Naive thymus-derived CD4-positive, alpha-beta T cell (primary cell): ENCODE measurements at regions of chr3 and their contacts with region 1.

Region 1: GRCh38 chr3:50611464-50612233 is at the start of gene CISH:
- DNase-seq: peak; percentile 86 to 98 (median 89)
- ATAC-seq: peak; percentile 77
- H3K4me3 ChIP-seq: peak within 1 kb of the TSS; percentile 93
- H3K4me3 Mint-ChIP-seq: peak within 1 kb of the TSS; percentile 83 to 98 (median 92)
- H3K27ac ChIP-seq: peak within 1 kb of the TSS; percentile 93
- H3K27ac Mint-ChIP-seq: peak within 1 kb of the TSS; percentile 89 to 96 (median 94)
- H3K4me1 ChIP-seq: peaks cover 55 to 56% of the 10 kb centered on the region in 2 donors
- H3K4me1 Mint-ChIP-seq: peaks cover 53 to 80% (median 64%) of the 10 kb centered on the region in 7 donors
- H3K27me3 ChIP-seq: no peaks in the 10 kb centered on the region
- H3K27me3 Mint-ChIP-seq: peaks cover 0 to 2% (median 0%) of the 10 kb centered on the region in 5 donors
- total RNA-seq, gene CISH: 10.9 to 486 (median 28.5) TPM

Region 2: GRCh38 chr3:50365080-50365841 is 246.4 kb before region 1 on chr3:
- CTCF ChIA-PET with region 1: no interaction called
- POLR2A ChIA-PET with region 1: no interaction called
- intact Hi-C with region 1: loop called in 1 of 2 experiments (anchors 2 kb)
- DNase-seq: peak; percentile 82 to 96 (median 94)
- ATAC-seq: peak; percentile 97
- H3K4me3 ChIP-seq: peak overlapping the region; percentile 99
- H3K4me3 Mint-ChIP-seq: peak overlapping the region; percentile 82 to 93 (median 90)
- H3K27ac ChIP-seq: peak overlapping the region; percentile 95
- H3K27ac Mint-ChIP-seq: peak overlapping the region; percentile 87 to 97 (median 94)
- H3K4me1 ChIP-seq: peaks cover 13 to 18% of the 10 kb centered on the region in 2 donors
- H3K4me1 Mint-ChIP-seq: peaks cover 8 to 36% (median 20%) of the 10 kb centered on the region in 7 donors
- H3K27me3 ChIP-seq: no peaks in the 10 kb centered on the region
- H3K27me3 Mint-ChIP-seq: no peaks in the 10 kb centered on the region

Region 3: DNA sequence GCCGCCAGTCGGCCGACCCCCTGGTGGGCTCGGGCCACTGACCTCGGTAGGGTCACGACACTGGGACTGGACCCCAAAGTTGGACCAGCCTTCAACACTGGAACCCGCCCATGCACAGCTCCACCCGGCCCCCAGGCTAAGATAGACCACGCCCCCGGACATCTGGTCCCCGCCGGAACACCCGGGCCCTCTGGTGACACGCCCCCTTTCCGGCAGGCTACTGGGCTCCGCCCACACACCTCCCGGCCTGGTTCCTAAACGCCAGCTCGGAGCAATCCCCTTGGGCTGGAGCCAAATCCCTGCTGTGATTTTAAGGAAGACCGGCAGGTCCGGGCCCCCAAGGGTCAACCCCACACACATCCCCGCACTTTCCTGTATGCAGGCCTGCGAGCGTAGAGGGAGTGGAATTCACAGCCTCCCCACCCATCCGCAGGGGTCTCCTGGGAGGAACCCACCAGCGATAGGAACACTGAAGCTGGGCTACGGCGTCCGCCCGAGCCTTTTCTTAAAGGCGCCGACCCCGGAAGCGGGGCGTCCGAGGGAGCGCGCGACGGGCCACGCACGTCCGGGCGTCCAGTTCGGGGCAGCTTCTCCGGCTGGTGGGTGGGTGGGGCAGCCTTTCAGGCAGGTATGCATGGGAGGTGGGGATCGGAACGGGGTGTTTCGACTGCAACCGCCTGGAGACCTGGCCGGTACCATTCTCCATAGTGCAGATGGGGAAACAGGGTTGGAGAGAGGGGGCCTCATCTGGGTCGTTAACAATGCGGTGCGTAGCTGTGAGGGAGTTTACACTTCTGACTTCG is 42.5 kb before region 1 on chr3 and contains the start of gene HEMK1:
- CTCF ChIA-PET with region 1: interaction called, 578 read pairs
- POLR2A ChIA-PET with region 1: interaction called, 730 read pairs
- intact Hi-C with region 1: loop called (anchors 1 kb)
- DNase-seq: peak; percentile 71 to 95 (median 90)
- ATAC-seq: peak; percentile 81
- H3K4me3 ChIP-seq: peak within 1 kb of the TSS; percentile 97
- H3K4me3 Mint-ChIP-seq: peak within 1 kb of the TSS; percentile 86 to 99 (median 96)
- H3K27ac ChIP-seq: peak within 1 kb of the TSS; percentile 84
- H3K27ac Mint-ChIP-seq: peak within 1 kb of the TSS; percentile 90 to 98 (median 93)
- H3K4me1 ChIP-seq: peaks cover 49 to 57% of the 10 kb centered on the region in 2 donors
- H3K4me1 Mint-ChIP-seq: peaks cover 37 to 75% (median 71%) of the 10 kb centered on the region in 7 donors
- H3K27me3 ChIP-seq: no peaks in the 10 kb centered on the region
- H3K27me3 Mint-ChIP-seq: no peaks in the 10 kb centered on the region
- total RNA-seq, gene HEMK1: 32.1 to 71.1 (median 66.1) TPM

Region 4: DNA sequence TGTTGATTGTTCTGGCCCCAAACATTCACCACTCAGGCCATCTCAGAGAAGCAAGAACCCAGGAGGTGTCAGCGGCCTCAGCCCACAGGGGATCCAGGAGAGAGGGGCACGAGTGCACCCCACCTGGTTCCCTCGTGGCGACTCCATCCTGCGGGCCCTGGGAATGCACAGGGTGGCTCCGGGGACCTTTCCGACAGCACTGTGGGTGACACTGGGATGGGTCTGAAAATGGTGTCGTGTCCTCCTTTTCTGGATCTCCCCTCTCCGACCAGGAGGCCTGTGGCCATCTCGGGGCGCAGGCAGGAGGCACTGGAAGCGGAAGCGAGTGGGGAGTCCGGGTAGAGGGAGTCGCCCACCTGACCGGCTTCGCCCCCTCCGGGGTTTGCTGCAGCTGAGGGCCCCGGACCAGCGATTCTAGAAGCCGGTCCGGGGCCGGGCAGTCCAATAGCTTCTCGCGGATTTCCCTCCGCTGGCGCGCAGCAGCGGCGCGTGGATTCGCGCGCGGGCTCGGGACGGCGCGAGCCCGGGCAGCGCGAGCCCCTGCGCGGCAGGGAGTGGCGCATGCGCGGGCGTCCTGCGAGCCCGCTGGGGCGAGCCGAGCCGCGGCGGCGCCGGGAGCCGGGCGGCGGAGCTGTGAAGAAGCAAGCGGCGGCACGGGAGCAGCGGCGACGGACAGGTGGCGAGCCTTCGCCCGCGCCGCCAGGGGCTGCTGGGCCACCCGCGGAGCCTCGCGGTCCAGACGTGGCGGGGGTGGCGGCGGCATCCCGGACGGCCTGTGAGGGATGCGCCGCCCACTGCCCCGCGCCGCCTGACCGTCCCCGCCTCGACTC is 62.9 kb after region 1 on chr3 and contains the start of gene DOCK3:
- CTCF ChIA-PET with region 1: interaction called, 3 read pairs
- POLR2A ChIA-PET with region 1: interaction called, 4 read pairs
- intact Hi-C with region 1: loop called in 1 of 2 experiments (anchors 1 kb)
- DNase-seq: peak; percentile 30 to 77 (median 69)
- ATAC-seq: peak; percentile 92
- H3K4me3 ChIP-seq: peak within 1 kb of the TSS; percentile 63
- H3K4me3 Mint-ChIP-seq: peak within 1 kb of the TSS; percentile 71 to 87 (median 81)
- H3K27ac ChIP-seq: no peak within 1 kb of the TSS
- H3K27ac Mint-ChIP-seq: peak within 1 kb of the TSS in 4 of 9 donors; percentile 4 to 58 (median 40)
- H3K4me1 ChIP-seq: no peaks in the 10 kb centered on the region
- H3K4me1 Mint-ChIP-seq: peaks cover 4 to 10% (median 6%) of the 10 kb centered on the region in 7 donors
- H3K27me3 ChIP-seq: peaks cover 0 to 3% of the 10 kb centered on the region in 2 donors
- H3K27me3 Mint-ChIP-seq: peaks cover 17 to 65% (median 32%) of the 10 kb centered on the region in 5 donors
- total RNA-seq, gene DOCK3: 1.5 to 2.9 (median 1.9) TPM

Region 5: DNA sequence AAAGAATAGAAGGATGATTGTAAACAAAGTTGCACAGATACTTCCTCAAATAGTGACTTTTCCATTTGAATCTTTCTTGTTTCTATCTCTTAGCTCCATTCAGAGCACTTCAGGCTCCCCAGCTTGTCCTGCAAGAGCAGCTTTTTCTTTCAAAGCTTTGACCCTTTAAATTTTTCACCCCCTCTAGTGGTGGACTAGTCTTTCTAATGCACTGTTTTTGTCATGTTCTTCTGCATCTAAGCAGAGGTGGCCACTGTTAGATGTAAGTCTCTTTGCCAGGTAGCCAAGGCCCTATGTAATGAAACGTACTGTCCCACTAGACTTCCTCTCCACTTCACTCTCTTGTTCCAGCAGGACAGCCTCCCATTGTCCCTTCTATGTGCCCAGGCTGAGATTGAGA is 699.4 kb after region 1 on chr3:
- CTCF ChIA-PET with region 1: interaction called, 7 read pairs
- POLR2A ChIA-PET with region 1: no interaction called
- intact Hi-C with region 1: loop called in 1 of 2 experiments (anchors 5 kb)
- DNase-seq: peak in 7 of 9 donors; percentile 4 to 53 (median 39)
- ATAC-seq: peak; percentile 32
- H3K4me3 ChIP-seq: no peak overlapping the region
- H3K4me3 Mint-ChIP-seq: no peak overlapping the region
- H3K27ac ChIP-seq: no peak overlapping the region
- H3K27ac Mint-ChIP-seq: no peak overlapping the region
- H3K4me1 ChIP-seq: no peaks in the 10 kb centered on the region
- H3K4me1 Mint-ChIP-seq: peaks cover 0 to 10% (median 0%) of the 10 kb centered on the region in 7 donors
- H3K27me3 ChIP-seq: peaks cover 0 to 7% of the 10 kb centered on the region in 2 donors
- H3K27me3 Mint-ChIP-seq: no peaks in the 10 kb centered on the region

Region 6: DNA sequence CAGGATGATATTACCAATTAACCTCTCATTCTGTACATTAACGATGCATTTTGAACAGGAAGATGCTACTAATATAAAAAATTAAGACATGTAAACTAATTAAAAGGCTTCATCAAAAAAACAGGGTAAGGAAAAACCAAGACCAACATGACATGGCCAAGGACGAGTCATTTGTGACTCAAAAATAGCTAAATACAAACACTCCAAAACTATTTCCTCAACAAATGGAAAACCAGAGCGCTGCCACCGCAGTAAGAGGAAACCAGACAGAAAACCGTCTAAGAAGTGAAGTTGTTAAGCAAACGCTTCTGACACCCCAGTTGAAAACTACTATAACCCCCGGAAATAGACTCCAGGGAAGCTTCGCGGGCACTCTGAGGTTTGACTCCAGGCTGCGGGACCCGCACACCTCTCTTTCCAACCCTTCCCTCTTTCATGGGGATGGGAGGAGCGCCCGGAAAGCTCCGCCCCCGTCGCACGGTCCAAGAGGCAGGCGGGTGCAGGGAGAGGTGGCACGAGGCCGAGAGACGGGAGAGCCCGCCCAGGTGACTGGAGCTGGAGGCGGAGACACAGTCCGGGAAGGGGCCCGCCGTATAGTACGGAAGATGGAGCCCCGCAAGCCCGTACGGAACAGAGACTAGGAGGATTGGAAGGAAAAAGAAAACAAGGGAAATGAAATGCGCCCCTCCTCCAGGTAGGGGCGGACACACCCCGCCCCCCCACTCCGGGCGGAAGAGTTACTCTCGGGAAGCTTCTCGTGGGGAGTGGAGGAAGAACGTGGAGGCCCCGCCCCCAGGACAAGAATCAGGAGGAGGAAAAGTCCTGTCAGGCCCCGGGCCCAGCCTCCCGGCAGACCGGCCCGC is 887.5 kb after region 1 on chr3:
- CTCF ChIA-PET with region 1: interaction called, 4 read pairs
- POLR2A ChIA-PET with region 1: interaction called, 4 read pairs
- intact Hi-C with region 1: loop called (anchors 1 kb)
- DNase-seq: peak; percentile 52 to 90 (median 73)
- ATAC-seq: peak; percentile 58
- H3K4me3 ChIP-seq: peak overlapping the region; percentile 84
- H3K4me3 Mint-ChIP-seq: peak overlapping the region; percentile 87 to 100 (median 98)
- H3K27ac ChIP-seq: peak overlapping the region; percentile 90
- H3K27ac Mint-ChIP-seq: peak overlapping the region; percentile 90 to 99 (median 94)
- H3K4me1 ChIP-seq: peaks cover 10 to 14% of the 10 kb centered on the region in 2 donors
- H3K4me1 Mint-ChIP-seq: peaks cover 4 to 38% (median 35%) of the 10 kb centered on the region in 7 donors
- H3K27me3 ChIP-seq: no peaks in the 10 kb centered on the region
- H3K27me3 Mint-ChIP-seq: peaks cover 0 to 2% (median 0%) of the 10 kb centered on the region in 5 donors